ENCODE measurements at regions of chr9 and their contacts with region 1.

Region 1: GRCh38 chr9:133417541-133418461 is at the start of gene REXO4:
- DNase-seq: peak; percentile 92
- H3K4me3 Mint-ChIP-seq: peak within 1 kb of the TSS; percentile 92
- H3K27ac Mint-ChIP-seq: peak within 1 kb of the TSS; percentile 88
- H3K4me1 Mint-ChIP-seq: peaks cover 59% of the 10 kb centered on the region
- H3K27me3 Mint-ChIP-seq: no peaks in the 10 kb centered on the region
- total RNA-seq, gene REXO4: 24.2 to 26.3 TPM

Region 2: GRCh38 chr9:133406480-133407307 is 11.1 kb before region 1 on chr9:
- CTCF ChIA-PET with region 1: interaction called, 3 read pairs
- POLR2A ChIA-PET with region 1: interaction called, 3 read pairs
- intact Hi-C with region 1: loop called (anchors 1 kb)
- DNase-seq: peak; percentile 92
- H3K4me3 Mint-ChIP-seq: no peak overlapping the region
- H3K27ac Mint-ChIP-seq: peak overlapping the region; percentile 83
- H3K4me1 Mint-ChIP-seq: peaks cover 14% of the 10 kb centered on the region
- H3K27me3 Mint-ChIP-seq: no peaks in the 10 kb centered on the region

Region 3: DNA sequence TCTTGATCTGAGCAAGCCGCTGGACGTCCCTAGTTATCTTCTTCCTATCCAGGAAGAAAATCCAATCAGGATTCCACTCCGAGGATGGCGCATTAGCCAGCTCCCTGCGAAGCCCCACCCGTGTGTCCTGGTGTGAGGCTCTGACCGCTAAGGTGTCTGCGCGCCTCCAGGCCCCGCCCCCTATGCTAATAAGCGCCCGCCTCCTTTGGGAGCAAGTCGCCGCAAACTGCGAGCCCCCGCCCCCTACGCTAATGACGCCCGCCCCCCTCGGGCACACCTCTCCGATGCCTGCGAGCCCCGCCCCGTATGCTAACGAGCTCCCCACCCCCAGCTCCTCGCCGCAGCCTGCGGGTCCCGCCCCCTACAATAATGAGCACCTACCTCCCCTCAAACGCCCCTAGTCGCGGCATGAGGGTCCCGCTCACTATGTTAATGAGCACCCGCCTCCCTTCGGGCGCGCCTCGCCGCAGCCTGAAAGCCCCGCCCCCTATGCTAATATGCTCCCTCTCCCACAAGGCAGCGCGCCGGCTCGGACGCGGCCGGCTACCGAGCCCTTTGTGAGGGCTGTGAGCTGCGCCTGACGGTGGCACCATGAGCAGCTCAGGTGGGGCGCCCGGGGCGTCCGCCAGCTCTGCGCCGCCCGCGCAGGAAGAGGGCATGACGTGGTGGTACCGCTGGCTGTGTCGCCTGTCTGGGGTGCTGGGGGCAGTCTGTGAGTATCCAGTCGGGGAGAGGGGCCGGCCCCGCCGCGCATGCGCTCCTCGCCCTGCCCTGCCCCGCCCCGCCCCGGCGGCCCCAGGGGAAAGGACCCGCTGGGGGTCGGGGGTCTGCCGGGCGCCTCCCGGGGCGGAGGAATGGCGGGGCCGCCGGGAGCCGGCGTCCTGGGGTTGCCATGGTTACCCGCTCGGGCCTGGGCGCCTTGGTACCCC is 41.9 kb after region 1 on chr9 and contains the start of gene CACFD1:
- CTCF ChIA-PET with region 1: no interaction called
- POLR2A ChIA-PET with region 1: no interaction called
- intact Hi-C with region 1: loop called (anchors 5 kb)
- DNase-seq: peak; percentile 94
- H3K4me3 Mint-ChIP-seq: peak within 1 kb of the TSS; percentile 82
- H3K27ac Mint-ChIP-seq: peak within 1 kb of the TSS; percentile 62
- H3K4me1 Mint-ChIP-seq: peaks cover 7% of the 10 kb centered on the region
- H3K27me3 Mint-ChIP-seq: no peaks in the 10 kb centered on the region
- total RNA-seq, gene CACFD1: 1.1 to 1.2 TPM

Region 4: DNA sequence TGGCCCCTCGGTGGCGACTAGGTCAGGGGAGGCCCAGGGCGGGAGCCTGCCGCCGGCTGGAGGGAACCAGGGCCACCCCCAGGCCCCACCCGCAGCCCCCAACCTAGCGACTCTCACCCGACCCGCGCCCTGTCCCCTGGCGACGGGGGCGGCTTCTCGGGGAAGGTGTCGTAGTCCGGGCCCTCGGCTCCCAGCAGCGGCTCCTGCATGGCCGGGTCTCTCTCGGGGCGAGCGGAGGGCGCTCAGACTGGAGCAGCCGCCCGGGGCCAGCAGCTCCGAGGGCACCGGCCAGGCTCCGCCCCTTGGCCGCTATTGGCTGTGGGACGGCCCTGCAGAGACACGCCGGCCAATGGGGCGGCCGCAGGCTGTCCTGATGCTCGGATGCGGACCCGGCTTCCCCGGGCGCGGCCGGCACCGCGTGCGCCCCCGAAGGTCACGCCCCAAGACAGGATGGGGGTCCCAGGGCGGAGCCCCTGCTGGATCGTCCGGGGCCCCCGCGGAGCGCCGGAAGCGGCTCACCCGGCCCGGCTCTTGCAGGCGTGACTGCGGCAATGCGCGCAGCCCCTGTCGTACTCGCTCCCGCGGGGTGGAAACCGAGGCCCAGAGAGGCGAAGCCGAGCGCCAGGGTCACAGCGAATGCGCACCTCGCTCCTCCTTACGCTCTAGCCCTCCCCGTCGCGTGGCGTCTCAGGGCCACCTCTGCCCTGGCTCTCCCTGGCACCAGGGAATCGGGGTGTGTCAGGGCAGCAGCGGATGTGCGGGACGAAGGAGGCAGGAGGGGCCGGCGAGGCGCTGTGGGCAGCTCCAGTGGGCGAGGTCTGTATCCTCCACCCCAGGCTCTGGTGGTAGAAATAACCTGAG is 61.3 kb after region 1 on chr9 and contains the start of gene SLC2A6:
- CTCF ChIA-PET with region 1: interaction called, 3 read pairs
- POLR2A ChIA-PET with region 1: no interaction called
- intact Hi-C with region 1: loop called (anchors 5 kb)
- DNase-seq: peak; percentile 86
- H3K4me3 Mint-ChIP-seq: peak within 1 kb of the TSS; percentile 61
- H3K27ac Mint-ChIP-seq: no peak within 1 kb of the TSS
- H3K4me1 Mint-ChIP-seq: peaks cover 5% of the 10 kb centered on the region
- H3K27me3 Mint-ChIP-seq: no peaks in the 10 kb centered on the region
- total RNA-seq, gene SLC2A6: 2.2 to 2.6 TPM